Heart right ventricle (tissue), 16 donors: ENCODE measurements at regions of chr17 and their contacts with region 1.

Region 1: DNA sequence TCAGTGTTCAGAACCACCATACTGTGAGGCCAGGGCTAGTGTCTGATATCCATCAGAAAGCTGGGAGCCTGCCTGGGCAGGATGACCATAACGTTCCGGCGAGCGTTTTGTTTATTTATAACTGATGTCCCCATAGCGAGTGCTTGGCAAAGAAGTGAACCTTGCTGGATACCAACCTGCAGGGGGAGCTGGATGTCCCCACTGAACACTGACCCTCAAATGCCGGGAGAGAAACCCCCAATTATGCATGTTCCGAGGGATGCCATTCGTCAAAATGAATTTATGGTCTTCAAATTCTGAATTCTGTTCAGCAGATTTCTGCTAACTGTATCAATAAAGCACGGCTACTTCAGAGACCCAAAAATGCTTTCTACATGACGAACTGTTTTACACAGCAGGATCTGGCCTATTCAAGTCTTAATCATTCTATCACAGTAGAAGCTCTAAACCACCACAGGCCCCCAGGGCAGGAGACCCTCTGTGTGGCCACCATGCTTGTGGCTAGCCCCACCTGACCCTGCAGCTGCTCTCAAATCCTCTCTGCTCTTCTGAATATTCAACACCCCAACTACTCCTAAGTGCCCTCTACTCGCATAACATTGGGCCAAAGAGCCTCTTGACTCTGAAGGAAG is 15.2 kb downstream of the MED24 start:
- DNase-seq: peak; percentile 54 to 87
- ATAC-seq: peak; percentile 88 to 98 (median 94)
- H3K4me3 ChIP-seq: peak overlapping the region in 1 of 10 donors; percentile 12
- H3K27ac ChIP-seq: peak overlapping the region; percentile 51 to 86 (median 78)
- H3K4me1 ChIP-seq: peaks cover 0 to 30% (median 17%) of the 10 kb centered on the region in 9 donors
- H3K27me3 ChIP-seq: no peaks in the 10 kb centered on the region
- CTCF ChIP-seq: peak; percentile 65 to 85 (median 73)

Region 2: GRCh38 chr17:40177275-40177874 is 138.4 kb after region 1 on chr17 and contains the start of gene RAPGEFL1:
- intact Hi-C with region 1: loop called in 1 of 10 experiments (anchors 10 kb)
- DNase-seq: peak; percentile 75 to 82
- ATAC-seq: peak; percentile 61 to 89 (median 82)
- H3K4me3 ChIP-seq: peak within 1 kb of the TSS; percentile 10 to 62 (median 54)
- H3K27ac ChIP-seq: peak within 1 kb of the TSS in 2 of 10 donors; percentile 12 to 34
- H3K4me1 ChIP-seq: peaks cover 6 to 31% (median 11%) of the 10 kb centered on the region in 9 donors
- H3K27me3 ChIP-seq: peaks cover 0 to 14% (median 0%) of the 10 kb centered on the region in 7 donors
- CTCF ChIP-seq: peak in 1 of 9 donors; percentile 5
- total RNA-seq, gene RAPGEFL1: 2.2 to 5.7 (median 3.2) TPM